CD8-positive, alpha-beta T cell (primary cell): ENCODE measurements at regions of chr2 and their contacts with region 1.

Region 1: GRCh38 chr2:55617175-55618024 is at the start of gene PPP4R3B:
- DNase-seq: peak; percentile 96 to 100 (median 98)
- ATAC-seq: peak; percentile 83
- H3K4me3 ChIP-seq: peak within 1 kb of the TSS; percentile 95 to 97
- H3K4me3 Mint-ChIP-seq: no peak within 1 kb of the TSS
- H3K27ac ChIP-seq: peak within 1 kb of the TSS; percentile 97 to 99
- H3K27ac Mint-ChIP-seq: no peak within 1 kb of the TSS
- H3K4me1 ChIP-seq: peaks cover 50% of the 10 kb centered on the region
- H3K4me1 Mint-ChIP-seq: peaks cover 63% of the 10 kb centered on the region
- H3K27me3 ChIP-seq: no peaks in the 10 kb centered on the region
- H3K27me3 Mint-ChIP-seq: no peaks in the 10 kb centered on the region
- CTCF ChIP-seq: peak; percentile 21
- total RNA-seq, gene PPP4R3B: 39.0 to 43.9 TPM

Region 2: DNA sequence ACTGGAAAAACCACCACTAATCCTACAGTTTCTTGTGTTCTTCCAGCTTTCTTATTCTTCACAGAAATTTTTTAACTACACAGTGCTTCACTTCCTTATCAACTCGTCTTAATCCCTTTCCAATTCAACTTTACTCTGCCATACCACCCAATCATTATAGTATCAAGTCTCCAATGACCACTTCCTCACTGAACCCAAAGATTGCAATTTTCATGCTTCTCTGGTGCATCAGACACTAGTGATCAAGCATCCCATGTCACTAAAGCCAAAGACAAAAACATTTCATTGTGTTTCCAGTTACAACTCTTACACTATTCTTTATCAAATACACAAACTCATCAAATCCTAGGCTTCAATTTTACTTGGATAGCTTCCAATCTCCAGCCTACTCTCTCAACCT is 1840.3 kb before region 1 on chr2:
- CTCF ChIA-PET with region 1: no interaction called
- POLR2A ChIA-PET with region 1: no interaction called
- intact Hi-C with region 1: no loop called
- DNase-seq: no peak
- ATAC-seq: no peak
- H3K4me3 ChIP-seq: no peak overlapping the region
- H3K4me3 Mint-ChIP-seq: no peak overlapping the region
- H3K27ac ChIP-seq: no peak overlapping the region
- H3K27ac Mint-ChIP-seq: peak overlapping the region; percentile 28
- H3K4me1 ChIP-seq: no peaks in the 10 kb centered on the region
- H3K4me1 Mint-ChIP-seq: peaks cover 37% of the 10 kb centered on the region
- H3K27me3 ChIP-seq: no peaks in the 10 kb centered on the region
- H3K27me3 Mint-ChIP-seq: no peaks in the 10 kb centered on the region
- CTCF ChIP-seq: no peak

Region 3: GRCh38 chr2:53970724-53971602 is 1646.4 kb before region 1 on chr2 and contains the start of gene PSME4:
- CTCF ChIA-PET with region 1: no interaction called
- POLR2A ChIA-PET with region 1: no interaction called
- intact Hi-C with region 1: loop called in 1 of 2 experiments (anchors 2 kb)
- DNase-seq: peak; percentile 88 to 97 (median 93)
- ATAC-seq: peak; percentile 90
- H3K4me3 ChIP-seq: peak within 1 kb of the TSS; percentile 78 to 99
- H3K4me3 Mint-ChIP-seq: peak within 1 kb of the TSS; percentile 95
- H3K27ac ChIP-seq: peak within 1 kb of the TSS; percentile 83 to 92
- H3K27ac Mint-ChIP-seq: peak within 1 kb of the TSS; percentile 98
- H3K4me1 ChIP-seq: peaks cover 25% of the 10 kb centered on the region
- H3K4me1 Mint-ChIP-seq: peaks cover 56% of the 10 kb centered on the region
- H3K27me3 ChIP-seq: no peaks in the 10 kb centered on the region
- H3K27me3 Mint-ChIP-seq: no peaks in the 10 kb centered on the region
- CTCF ChIP-seq: no peak
- total RNA-seq, gene PSME4: 98.8 to 107 TPM

Region 4: DNA sequence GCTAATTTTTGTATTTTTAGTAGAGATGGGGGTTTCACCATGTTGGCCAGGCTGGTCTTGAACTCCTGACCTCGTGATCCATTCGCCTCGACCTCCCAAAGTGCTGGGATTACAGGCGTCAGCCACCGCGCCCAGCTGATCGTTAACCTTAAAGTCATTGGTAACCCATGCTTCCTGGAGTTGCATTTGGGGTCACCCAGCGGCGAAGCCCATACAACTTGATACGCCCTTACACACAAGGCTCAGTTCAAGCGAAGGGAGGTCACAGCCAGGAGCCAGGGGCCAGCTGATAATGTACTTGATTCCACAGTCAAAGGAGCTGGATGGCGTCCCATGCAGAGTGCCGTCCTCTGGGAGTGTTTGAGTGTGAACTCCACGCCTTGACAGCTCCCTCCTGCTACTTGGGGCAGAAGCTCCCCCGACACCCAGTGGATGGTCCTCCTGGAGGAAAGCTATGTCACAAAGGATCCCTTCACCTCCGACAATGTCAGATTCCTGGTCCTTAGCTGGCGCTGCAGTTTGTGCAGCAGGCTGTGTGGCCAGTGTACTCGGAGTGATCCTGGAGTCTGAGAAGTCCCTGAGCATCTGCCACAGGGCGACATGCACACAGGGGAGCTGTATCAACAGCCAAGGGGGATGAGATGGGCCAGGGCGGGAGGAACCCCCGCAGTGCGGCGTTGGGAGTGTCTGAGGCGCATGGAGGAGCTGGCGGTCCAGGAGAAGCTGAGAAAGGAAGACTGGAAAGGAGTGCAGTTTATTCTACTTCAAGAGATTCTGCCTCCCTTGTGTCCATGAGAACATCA is 393.2 kb before region 1 on chr2:
- CTCF ChIA-PET with region 1: no interaction called
- POLR2A ChIA-PET with region 1: interaction called, 5 read pairs
- intact Hi-C with region 1: loop called in 1 of 2 experiments (anchors 2 kb)
- DNase-seq: peak in 3 of 9 experiments; percentile 5 to 52 (median 34)
- ATAC-seq: no peak
- H3K4me3 ChIP-seq: peak overlapping the region in 1 of 2 experiments; percentile 53
- H3K4me3 Mint-ChIP-seq: peak overlapping the region; percentile 84
- H3K27ac ChIP-seq: peak overlapping the region; percentile 68 to 72
- H3K27ac Mint-ChIP-seq: peak overlapping the region; percentile 91
- H3K4me1 ChIP-seq: peaks cover 28% of the 10 kb centered on the region
- H3K4me1 Mint-ChIP-seq: peaks cover 42% of the 10 kb centered on the region
- H3K27me3 ChIP-seq: no peaks in the 10 kb centered on the region
- H3K27me3 Mint-ChIP-seq: no peaks in the 10 kb centered on the region
- CTCF ChIP-seq: no peak

Region 5: GRCh38 chr2:55419679-55420438 is 197.5 kb before region 1 on chr2 and contains the start of gene CCDC88A:
- CTCF ChIA-PET with region 1: no interaction called
- POLR2A ChIA-PET with region 1: interaction called, 6 read pairs
- intact Hi-C with region 1: loop called (anchors 1 to 2 kb)
- DNase-seq: peak; percentile 71 to 96 (median 85)
- ATAC-seq: peak; percentile 80
- H3K4me3 ChIP-seq: peak within 1 kb of the TSS; percentile 75 to 93
- H3K4me3 Mint-ChIP-seq: peak within 1 kb of the TSS; percentile 92
- H3K27ac ChIP-seq: peak within 1 kb of the TSS; percentile 57 to 83
- H3K27ac Mint-ChIP-seq: peak within 1 kb of the TSS; percentile 87
- H3K4me1 ChIP-seq: peaks cover 14% of the 10 kb centered on the region
- H3K4me1 Mint-ChIP-seq: peaks cover 38% of the 10 kb centered on the region
- H3K27me3 ChIP-seq: no peaks in the 10 kb centered on the region
- H3K27me3 Mint-ChIP-seq: peaks cover 4% of the 10 kb centered on the region
- CTCF ChIP-seq: no peak
- total RNA-seq, gene CCDC88A: 9.5 to 12.3 TPM

Region 6: GRCh38 chr2:55598056-55598795 is 19.2 kb before region 1 on chr2:
- CTCF ChIA-PET with region 1: no interaction called
- POLR2A ChIA-PET with region 1: interaction called, 5 read pairs
- intact Hi-C with region 1: loop called in 1 of 2 experiments (anchors 2 kb)
- DNase-seq: no peak
- ATAC-seq: no peak
- H3K4me3 ChIP-seq: no peak overlapping the region
- H3K4me3 Mint-ChIP-seq: no peak overlapping the region
- H3K27ac ChIP-seq: no peak overlapping the region
- H3K27ac Mint-ChIP-seq: no peak overlapping the region
- H3K4me1 ChIP-seq: peaks cover 6% of the 10 kb centered on the region
- H3K4me1 Mint-ChIP-seq: peaks cover 54% of the 10 kb centered on the region
- H3K27me3 ChIP-seq: no peaks in the 10 kb centered on the region
- H3K27me3 Mint-ChIP-seq: no peaks in the 10 kb centered on the region
- CTCF ChIP-seq: no peak

Region 7: GRCh38 chr2:55804535-55804934 is 187.1 kb after region 1 on chr2:
- CTCF ChIA-PET with region 1: no interaction called
- POLR2A ChIA-PET with region 1: no interaction called
- intact Hi-C with region 1: no loop called
- DNase-seq: no peak
- ATAC-seq: no peak
- H3K4me3 ChIP-seq: no peak overlapping the region
- H3K4me3 Mint-ChIP-seq: no peak overlapping the region
- H3K27ac ChIP-seq: no peak overlapping the region
- H3K27ac Mint-ChIP-seq: no peak overlapping the region
- H3K4me1 ChIP-seq: no peaks in the 10 kb centered on the region
- H3K4me1 Mint-ChIP-seq: no peaks in the 10 kb centered on the region
- H3K27me3 ChIP-seq: no peaks in the 10 kb centered on the region
- H3K27me3 Mint-ChIP-seq: no peaks in the 10 kb centered on the region
- CTCF ChIP-seq: no peak